Head of caudate nucleus (tissue), 42 donors: ENCODE measurements at regions of chr4 and their contacts with region 1.

Region 1: GRCh38 chr4:40325189-40326019 is 9.7 kb upstream of the CHRNA9 start:
- DNase-seq: peak in 31 of 42 donors; percentile 24 to 87 (median 54)

Region 2: GRCh38 chr4:40056716-40057585 is 268.5 kb before region 1 on chr4 and contains the start of gene N4BP2:
- intact Hi-C with region 1: loop called (anchors 5 kb)
- DNase-seq: peak in 41 of 42 donors; percentile 38 to 90 (median 78)

Region 3: DNA sequence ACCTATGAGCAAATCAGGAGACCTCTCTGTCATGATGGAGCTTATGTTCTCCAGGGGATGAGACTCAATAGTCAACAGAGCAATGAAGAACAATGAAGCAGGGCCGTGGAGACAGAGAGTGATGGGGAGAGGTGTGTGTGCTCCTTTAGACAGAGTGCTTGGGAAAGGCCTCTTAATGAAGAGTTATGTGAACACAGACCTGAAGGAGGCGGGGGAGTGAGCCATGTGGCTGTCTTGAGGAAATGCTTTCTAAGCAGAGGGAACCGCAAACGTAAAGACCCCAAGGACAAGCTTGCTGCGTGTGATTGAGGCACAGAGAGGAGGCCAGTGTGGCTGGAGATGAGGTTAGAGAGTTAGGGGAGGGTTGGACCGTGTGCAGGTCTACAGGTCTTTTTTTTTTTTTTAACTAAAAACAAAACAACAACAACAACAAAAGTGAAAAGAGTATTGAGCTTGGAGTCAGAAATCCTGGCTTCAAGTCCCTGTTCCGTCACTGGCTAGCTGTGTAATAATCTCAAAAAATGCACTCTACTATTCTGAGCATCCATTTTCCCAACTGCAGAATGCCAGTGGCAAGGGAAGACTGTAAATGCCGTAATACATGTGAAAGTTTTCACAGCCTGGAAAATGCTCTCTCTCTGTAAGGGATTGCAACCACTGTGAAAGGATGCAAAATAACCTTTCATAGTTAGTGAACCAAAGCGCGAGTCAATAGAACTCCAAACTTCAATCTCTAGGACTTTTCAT is 63.0 kb after region 1 on chr4:
- intact Hi-C with region 1: no loop called
- DNase-seq: no peak